Posterior cingulate gyrus (tissue), 11 donors: ENCODE measurements at regions of chr10 and their contacts with region 1.

Region 1: DNA sequence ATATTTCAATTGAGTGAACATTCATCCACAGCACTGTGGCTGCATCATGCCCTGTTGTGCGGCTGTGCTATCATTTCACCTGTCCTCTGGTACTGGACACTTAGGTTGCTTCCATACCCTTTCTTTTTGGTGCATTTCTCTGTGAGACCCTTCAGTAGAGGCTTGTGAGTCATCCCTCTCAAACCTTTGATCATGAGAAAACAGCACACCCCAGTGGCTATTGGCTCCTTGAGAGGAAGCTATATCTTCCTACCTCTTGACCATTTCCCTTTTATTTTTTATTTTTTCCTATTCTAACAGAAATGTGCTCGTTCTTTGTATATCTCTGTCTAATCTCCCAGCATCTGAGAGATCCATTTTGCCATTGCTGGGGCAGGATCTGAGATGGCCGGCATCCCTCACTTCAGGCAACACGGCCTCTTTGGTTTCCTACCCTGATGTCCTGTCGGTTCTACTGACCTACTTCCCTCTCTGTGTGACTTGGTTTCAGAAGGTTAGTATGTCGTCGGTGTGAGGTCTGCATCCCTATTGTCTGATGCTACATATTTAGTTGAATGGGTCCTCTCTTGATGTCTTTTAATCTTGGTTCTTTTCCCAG is 23.8 kb upstream of the PIK3AP1 start:
- DNase-seq: no peak

Region 2: GRCh38 chr10:96642973-96643372 is 101.1 kb before region 1 on chr10:
- intact Hi-C with region 1: loop called (anchors 5 kb)
- DNase-seq: peak in 7 of 10 donors; percentile 46 to 92 (median 60)